Activated CD8-positive, alpha-beta T cell treated with anti-CD3 and anti-CD28 coated beads, Interleukin-2, amount 10 ng/mL, durations not matched to agents 7 days and 5 days (primary cell): ENCODE measurements at regions of chr16 and their contacts with region 1.

Region 1: DNA sequence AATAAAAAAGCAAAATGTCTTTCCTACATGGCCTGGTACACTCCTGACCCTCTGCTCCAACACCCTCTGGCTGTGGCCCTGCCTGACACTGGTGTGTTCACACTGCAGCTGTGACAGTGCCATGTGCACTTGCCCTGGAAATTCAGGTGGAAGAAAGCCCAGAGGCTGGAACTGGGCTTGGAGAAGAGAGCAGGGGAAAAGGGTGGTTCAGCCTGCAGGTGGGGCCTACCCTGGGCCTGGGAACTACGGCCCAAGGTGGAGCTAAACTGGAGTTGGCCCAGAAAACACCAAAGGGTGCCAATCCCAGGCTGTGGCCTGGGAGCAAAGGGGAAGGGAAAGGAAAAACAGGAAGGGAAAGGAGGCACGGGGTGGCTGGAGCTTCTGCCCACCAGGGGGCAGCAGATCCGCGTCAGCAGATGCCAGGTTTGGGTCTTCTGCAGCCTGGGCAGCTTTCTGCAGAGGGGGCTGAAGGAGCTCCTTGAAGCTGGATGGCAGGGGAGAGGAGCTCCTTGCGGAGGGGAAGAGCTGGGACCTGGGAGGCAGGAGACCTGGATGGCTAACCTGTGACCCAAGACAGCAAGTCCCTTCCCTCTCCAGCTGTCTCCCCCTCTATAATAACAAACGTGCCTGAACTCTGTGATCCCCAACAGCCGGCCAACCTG is 15.4 kb upstream of the CTCF start:
- DNase-seq: peak; percentile 83
- ATAC-seq: peak; percentile 52
- H3K4me3 Mint-ChIP-seq: peak overlapping the region; percentile 64
- H3K27ac Mint-ChIP-seq: peak overlapping the region; percentile 99
- H3K4me1 Mint-ChIP-seq: peaks cover 55% of the 10 kb centered on the region
- H3K27me3 Mint-ChIP-seq: no peaks in the 10 kb centered on the region

Region 2: GRCh38 chr16:67499106-67499505 is 47.8 kb before region 1 on chr16:
- CTCF ChIA-PET with region 1: interaction called, 13 read pairs
- POLR2A ChIA-PET with region 1: interaction called, 3 read pairs
- DNase-seq: no peak
- ATAC-seq: no peak
- H3K4me3 Mint-ChIP-seq: no peak overlapping the region
- H3K27ac Mint-ChIP-seq: peak overlapping the region; percentile 34
- H3K4me1 Mint-ChIP-seq: peaks cover 13% of the 10 kb centered on the region
- H3K27me3 Mint-ChIP-seq: no peaks in the 10 kb centered on the region

Region 3: GRCh38 chr16:67571981-67572431 is 25.1 kb after region 1 on chr16:
- CTCF ChIA-PET with region 1: interaction called, 296 read pairs
- POLR2A ChIA-PET with region 1: interaction called, 3 read pairs
- DNase-seq: no peak
- ATAC-seq: no peak
- H3K4me3 Mint-ChIP-seq: no peak overlapping the region
- H3K27ac Mint-ChIP-seq: peak overlapping the region; percentile 34
- H3K4me1 Mint-ChIP-seq: peaks cover 6% of the 10 kb centered on the region
- H3K27me3 Mint-ChIP-seq: no peaks in the 10 kb centered on the region

Region 4: GRCh38 chr16:67613808-67614207 is 66.9 kb after region 1 on chr16:
- CTCF ChIA-PET with region 1: interaction called, 18 read pairs
- POLR2A ChIA-PET with region 1: no interaction called
- DNase-seq: peak; percentile 24
- ATAC-seq: no peak
- H3K4me3 Mint-ChIP-seq: no peak overlapping the region
- H3K27ac Mint-ChIP-seq: no peak overlapping the region
- H3K4me1 Mint-ChIP-seq: no peaks in the 10 kb centered on the region
- H3K27me3 Mint-ChIP-seq: no peaks in the 10 kb centered on the region

Region 5: DNA sequence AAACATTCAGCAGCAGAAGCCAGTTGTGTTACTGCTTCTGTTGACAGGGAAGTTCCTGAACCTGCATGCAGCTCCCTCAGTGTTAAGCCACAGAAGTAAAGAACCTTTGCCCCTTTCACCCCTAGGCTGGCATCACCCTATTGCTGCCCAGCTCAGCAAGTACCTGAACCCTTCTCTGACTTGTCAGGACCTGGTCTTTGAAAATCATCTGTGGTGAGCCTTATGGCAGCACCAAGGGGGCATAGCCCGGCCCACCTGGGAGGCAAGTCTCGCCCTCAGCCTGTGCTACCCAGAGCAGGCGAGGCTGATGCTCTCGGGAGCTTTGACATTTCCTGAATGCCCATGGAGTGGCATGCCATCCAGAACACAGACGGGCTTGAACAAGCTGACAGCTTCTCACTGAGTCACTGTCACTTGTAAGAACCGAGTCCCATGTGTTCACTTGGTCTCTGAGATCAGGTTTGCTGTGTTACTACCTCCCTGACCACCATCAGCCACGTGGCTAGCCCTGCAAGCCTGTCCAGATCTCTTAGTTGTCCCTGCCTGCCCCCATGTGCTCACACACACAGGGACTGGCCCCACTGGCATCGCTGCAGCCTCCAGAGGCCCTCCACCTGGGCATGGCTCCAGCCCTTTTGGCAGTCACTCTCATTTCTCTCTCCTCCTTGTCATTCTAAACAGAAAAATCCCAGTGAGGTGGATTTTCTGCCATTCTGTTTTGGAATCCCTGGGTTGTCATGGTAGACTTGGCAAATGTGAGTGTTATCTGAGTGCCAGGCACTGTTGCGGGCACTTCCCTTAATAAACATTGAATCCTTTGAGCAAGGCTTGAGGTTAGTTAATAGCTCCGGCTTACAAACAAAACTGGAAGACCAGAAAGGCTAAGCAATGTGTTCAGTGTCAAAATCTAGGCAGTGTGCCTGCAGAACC is 95.2 kb after region 1 on chr16:
- CTCF ChIA-PET with region 1: interaction called, 245 read pairs
- POLR2A ChIA-PET with region 1: interaction called, 53 read pairs
- DNase-seq: no peak
- ATAC-seq: no peak
- H3K4me3 Mint-ChIP-seq: no peak overlapping the region
- H3K27ac Mint-ChIP-seq: no peak overlapping the region
- H3K4me1 Mint-ChIP-seq: peaks cover 19% of the 10 kb centered on the region
- H3K27me3 Mint-ChIP-seq: no peaks in the 10 kb centered on the region

Region 6: GRCh38 chr16:67667817-67668494 is 121.1 kb after region 1 on chr16:
- CTCF ChIA-PET with region 1: interaction called, 83 read pairs
- POLR2A ChIA-PET with region 1: interaction called, 7 read pairs
- DNase-seq: peak; percentile 90
- ATAC-seq: peak; percentile 85
- H3K4me3 Mint-ChIP-seq: peak overlapping the region; percentile 83
- H3K27ac Mint-ChIP-seq: peak overlapping the region; percentile 55
- H3K4me1 Mint-ChIP-seq: peaks cover 31% of the 10 kb centered on the region
- H3K27me3 Mint-ChIP-seq: no peaks in the 10 kb centered on the region

Region 7: GRCh38 chr16:67750466-67750865 is 203.6 kb after region 1 on chr16:
- CTCF ChIA-PET with region 1: no interaction called
- POLR2A ChIA-PET with region 1: no interaction called
- DNase-seq: no peak
- ATAC-seq: no peak
- H3K4me3 Mint-ChIP-seq: no peak overlapping the region
- H3K27ac Mint-ChIP-seq: no peak overlapping the region
- H3K4me1 Mint-ChIP-seq: no peaks in the 10 kb centered on the region
- H3K27me3 Mint-ChIP-seq: no peaks in the 10 kb centered on the region

Region 8: GRCh38 chr16:67979955-67980678 is 433.2 kb after region 1 on chr16 and contains the start of gene DPEP3:
- CTCF ChIA-PET with region 1: no interaction called
- POLR2A ChIA-PET with region 1: no interaction called
- DNase-seq: no peak
- ATAC-seq: no peak
- H3K4me3 Mint-ChIP-seq: no peak within 1 kb of the TSS
- H3K27ac Mint-ChIP-seq: no peak within 1 kb of the TSS
- H3K4me1 Mint-ChIP-seq: peaks cover 27% of the 10 kb centered on the region
- H3K27me3 Mint-ChIP-seq: peaks cover 6% of the 10 kb centered on the region
- total RNA-seq, gene DPEP3: not detected